Heart right ventricle (tissue), 16 donors: ENCODE measurements at regions of chr7 and their contacts with region 1.

Region 1: DNA sequence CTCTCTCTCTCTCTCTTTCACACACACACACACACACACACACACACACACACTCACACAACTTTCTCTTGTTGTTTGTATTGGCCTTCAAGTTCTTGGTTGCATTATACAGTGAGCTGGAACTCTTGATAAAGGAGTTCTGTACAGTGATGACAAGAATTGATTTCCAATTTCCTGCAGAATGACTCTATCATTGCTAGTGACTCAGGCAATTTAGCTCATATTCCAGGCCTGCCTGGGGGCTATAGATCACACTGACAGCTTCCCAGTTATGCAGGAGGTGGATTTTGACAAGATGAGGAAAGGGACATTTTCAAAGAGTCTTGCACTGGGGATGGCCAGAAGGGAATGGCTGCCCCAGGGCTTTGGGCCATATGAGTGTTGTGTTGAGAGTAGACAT is 508.8 kb downstream of the TYW1 start:
- DNase-seq: no peak
- ATAC-seq: no peak
- H3K4me3 ChIP-seq: no peak overlapping the region
- H3K27ac ChIP-seq: no peak overlapping the region
- H3K4me1 ChIP-seq: no peaks in the 10 kb centered on the region
- H3K27me3 ChIP-seq: no peaks in the 10 kb centered on the region
- CTCF ChIP-seq: no peak

Region 2: DNA sequence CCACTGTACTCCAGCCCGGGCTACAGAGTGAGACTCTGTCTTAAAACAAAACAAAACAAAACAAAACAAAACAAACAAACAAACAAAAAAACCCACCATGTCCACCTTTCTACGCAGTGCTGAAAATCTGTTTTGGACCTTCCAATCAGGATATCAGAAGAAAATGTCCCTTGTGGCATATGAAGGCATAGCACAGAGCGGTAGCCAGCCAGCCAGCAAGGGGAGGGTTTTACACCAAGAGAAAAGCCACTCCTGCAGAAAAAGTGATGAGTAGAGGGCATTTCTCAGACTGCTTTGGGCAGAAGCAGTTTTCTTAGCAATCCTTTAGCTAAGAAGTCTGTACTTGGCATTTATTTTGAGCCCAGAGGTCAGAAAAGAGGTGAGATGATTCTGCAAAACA is 103.4 kb after region 1 on chr7:
- intact Hi-C with region 1: loop called in 2 of 10 experiments (anchors 10 kb)
- DNase-seq: no peak
- ATAC-seq: no peak
- H3K4me3 ChIP-seq: no peak overlapping the region
- H3K27ac ChIP-seq: no peak overlapping the region
- H3K4me1 ChIP-seq: peaks cover 0 to 8% (median 0%) of the 10 kb centered on the region in 9 donors
- H3K27me3 ChIP-seq: peaks cover 0 to 7% (median 0%) of the 10 kb centered on the region in 7 donors
- CTCF ChIP-seq: no peak